Panc1 (cell line): ENCODE measurements at regions of chr6 and their contacts with region 1.

Region 1: GRCh38 chr6:8203337-8203736 is 101.0 kb upstream of the EEF1E1 start:
- DNase-seq: no peak
- ATAC-seq: no peak
- H3K4me3 ChIP-seq: no peak overlapping the region
- H3K27ac ChIP-seq: no peak overlapping the region
- H3K4me1 ChIP-seq: no peaks in the 10 kb centered on the region
- H3K27me3 ChIP-seq: no peaks in the 10 kb centered on the region
- CTCF ChIP-seq: no peak

Region 2: GRCh38 chr6:7992002-7992815 is 211.1 kb before region 1 on chr6:
- CTCF ChIA-PET with region 1: no interaction called
- POLR2A ChIA-PET with region 1: interaction called, 21 read pairs
- in situ Hi-C with region 1: no loop called
- intact Hi-C with region 1: no loop called
- DNase-seq: no peak
- ATAC-seq: peak; percentile 84
- H3K4me3 ChIP-seq: no peak overlapping the region
- H3K27ac ChIP-seq: no peak overlapping the region
- H3K4me1 ChIP-seq: no peaks in the 10 kb centered on the region
- H3K27me3 ChIP-seq: no peaks in the 10 kb centered on the region
- CTCF ChIP-seq: peak; percentile 61